ENCODE measurements at regions of chr13 and their contacts with region 1.

Region 1: DNA sequence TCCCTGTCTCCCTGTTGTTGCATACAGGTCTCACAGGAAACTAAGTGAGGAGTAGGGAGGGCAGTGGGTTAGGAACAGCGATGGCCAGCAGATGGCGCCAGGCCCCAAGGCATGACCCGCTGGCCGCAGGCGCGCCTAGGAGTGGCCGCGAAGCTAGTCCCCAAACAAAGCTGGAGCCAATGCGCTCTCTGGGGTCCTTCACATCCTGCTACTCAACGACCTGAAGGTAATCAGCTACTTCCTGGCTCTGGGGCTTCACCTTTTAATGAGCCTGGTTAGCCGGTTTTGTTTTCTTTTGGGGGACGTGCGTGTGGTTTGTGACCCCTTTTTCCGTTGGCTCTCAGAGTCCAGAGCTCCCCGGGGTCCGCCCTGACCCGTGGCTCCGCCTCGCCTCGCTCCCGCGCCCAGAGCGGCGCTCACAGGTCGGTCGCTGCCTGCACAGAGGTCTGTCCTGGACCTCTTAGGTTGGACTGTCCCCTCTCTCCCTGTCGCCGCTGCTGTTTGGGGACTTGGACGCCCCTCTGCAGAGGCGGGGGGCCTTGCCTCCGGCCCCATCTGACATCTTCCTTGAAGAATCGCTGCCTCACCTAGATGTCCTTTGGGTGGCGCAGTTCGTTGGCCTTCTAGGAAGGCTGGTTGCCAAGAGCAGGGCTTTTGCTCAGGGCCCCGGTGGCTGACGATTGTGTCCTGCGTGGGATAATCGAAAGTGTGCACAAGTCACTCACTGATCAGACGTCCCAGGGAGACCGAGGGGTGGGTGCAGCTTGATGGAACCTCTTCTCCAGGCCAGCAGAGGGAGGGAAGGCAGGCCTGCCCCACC is 62.1 kb upstream of the GTF3A start:
- DNase-seq: peak; percentile 93
- ATAC-seq: peak; percentile 96

Region 2: DNA sequence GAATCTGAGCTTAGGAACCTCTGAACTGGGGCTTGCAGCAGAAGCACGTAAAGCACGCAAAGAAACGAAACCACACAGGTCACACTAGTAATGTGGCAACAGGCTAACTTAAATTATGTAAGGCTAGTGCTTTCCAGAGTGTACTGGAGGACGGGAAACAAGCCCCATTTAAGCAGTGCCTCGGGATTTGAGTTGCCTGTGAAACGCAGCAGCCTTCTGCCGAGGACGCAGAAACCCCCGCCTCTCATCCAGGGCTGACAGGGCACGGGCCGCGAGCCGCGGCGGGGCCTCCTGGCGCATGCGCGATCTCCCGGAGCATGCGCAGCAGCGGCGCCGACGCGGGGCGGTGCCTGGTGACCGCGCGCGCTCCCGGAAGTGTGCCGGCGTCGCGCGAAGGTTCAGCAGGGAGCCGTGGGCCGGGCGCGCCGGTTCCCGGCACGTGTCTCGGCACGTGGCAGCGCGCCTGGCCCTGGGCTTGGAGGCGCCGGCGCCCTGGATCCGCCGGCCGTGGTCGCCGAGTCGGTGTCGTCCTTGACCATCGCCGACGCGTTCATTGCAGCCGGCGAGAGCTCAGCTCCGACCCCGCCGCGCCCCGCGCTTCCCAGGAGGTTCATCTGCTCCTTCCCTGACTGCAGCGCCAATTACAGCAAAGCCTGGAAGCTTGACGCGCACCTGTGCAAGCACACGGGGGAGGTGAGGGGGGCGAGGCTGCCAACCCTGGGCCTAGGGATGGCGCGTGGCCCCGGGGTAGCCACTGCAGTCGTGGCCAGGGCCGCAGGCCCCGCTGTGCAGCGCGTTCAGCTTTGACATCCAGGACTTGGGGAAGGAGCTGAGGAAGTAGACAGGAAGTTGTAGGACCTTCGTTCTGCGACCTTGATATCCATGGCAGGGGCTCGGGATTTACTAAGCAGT is 62.2 kb after region 1 on chr13 and contains the start of gene GTF3A:
- intact Hi-C with region 1: no loop called
- DNase-seq: peak; percentile 90
- ATAC-seq: peak; percentile 96
- total RNA-seq, gene GTF3A: 52.2 TPM

Region 3: DNA sequence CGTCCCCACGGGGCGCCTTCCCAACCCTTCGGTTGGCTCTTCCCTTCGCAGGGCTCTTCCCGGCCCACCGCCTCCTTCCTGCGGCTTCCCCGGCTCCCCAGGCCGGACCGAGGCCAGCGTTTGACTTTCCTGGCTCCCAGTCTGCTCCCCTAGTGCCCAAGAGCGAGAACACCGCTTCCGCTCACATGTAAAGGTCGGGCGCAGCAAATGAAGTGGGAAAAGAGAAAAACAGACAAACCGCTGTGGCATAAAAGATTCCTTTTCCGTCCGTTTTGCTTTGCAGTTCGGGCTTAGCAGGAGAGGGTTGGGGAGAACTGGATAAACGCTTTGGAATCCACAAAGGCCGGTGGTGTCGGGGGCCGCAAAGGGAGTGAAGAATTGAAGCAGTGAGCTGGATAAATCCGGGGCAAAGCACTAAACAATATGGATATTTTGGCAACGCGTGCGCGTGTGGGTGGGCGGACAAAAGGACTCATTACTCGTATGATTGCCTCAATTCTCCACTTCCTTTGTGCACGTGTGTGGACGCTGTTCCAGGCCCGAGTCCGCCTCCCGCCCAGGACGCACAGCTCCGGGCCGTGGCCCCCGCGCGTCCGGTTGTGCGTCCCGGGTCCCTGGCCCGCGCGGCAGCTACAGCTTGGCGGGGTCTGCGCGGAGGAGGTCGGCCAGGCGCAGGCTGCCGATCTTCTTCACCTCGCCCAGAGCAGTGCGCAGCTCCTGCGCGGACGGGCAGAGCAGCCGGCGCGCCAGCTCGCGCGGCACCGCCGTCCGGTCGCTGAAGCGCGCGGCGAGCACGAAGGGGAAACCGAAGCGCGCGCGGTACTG is 615.4 kb after region 1 on chr13:
- intact Hi-C with region 1: loop called (anchors 10 kb)
- DNase-seq: no peak
- ATAC-seq: no peak